Vagina (tissue), 2 donors: ENCODE measurements at regions of chr1 and their contacts with region 1.

Region 1: GRCh38 chr1:172745014-172745413 is 86.1 kb downstream of the FASLG start:
- DNase-seq: no peak
- H3K4me3 ChIP-seq: no peak overlapping the region
- H3K27ac ChIP-seq: no peak overlapping the region
- H3K4me1 ChIP-seq: peaks cover 18% of the 10 kb centered on the region
- H3K27me3 ChIP-seq: no peaks in the 10 kb centered on the region
- CTCF ChIP-seq: peak; percentile 28 to 70 (median 62)
- POLR2A ChIP-seq: no peak

Region 2: GRCh38 chr1:172719694-172720138 is 25.3 kb before region 1 on chr1:
- intact Hi-C with region 1: no loop called
- DNase-seq: no peak
- H3K4me3 ChIP-seq: no peak overlapping the region
- H3K27ac ChIP-seq: no peak overlapping the region
- H3K4me1 ChIP-seq: no peaks in the 10 kb centered on the region
- H3K27me3 ChIP-seq: no peaks in the 10 kb centered on the region
- CTCF ChIP-seq: peak in 2 of 3 experiments; percentile 33 to 76
- POLR2A ChIP-seq: no peak

Region 3: GRCh38 chr1:172883107-172883791 is 138.2 kb after region 1 on chr1:
- intact Hi-C with region 1: no loop called
- DNase-seq: no peak
- H3K4me3 ChIP-seq: no peak overlapping the region
- H3K27ac ChIP-seq: no peak overlapping the region
- H3K4me1 ChIP-seq: no peaks in the 10 kb centered on the region
- H3K27me3 ChIP-seq: no peaks in the 10 kb centered on the region
- CTCF ChIP-seq: no peak
- POLR2A ChIP-seq: no peak

Region 4: DNA sequence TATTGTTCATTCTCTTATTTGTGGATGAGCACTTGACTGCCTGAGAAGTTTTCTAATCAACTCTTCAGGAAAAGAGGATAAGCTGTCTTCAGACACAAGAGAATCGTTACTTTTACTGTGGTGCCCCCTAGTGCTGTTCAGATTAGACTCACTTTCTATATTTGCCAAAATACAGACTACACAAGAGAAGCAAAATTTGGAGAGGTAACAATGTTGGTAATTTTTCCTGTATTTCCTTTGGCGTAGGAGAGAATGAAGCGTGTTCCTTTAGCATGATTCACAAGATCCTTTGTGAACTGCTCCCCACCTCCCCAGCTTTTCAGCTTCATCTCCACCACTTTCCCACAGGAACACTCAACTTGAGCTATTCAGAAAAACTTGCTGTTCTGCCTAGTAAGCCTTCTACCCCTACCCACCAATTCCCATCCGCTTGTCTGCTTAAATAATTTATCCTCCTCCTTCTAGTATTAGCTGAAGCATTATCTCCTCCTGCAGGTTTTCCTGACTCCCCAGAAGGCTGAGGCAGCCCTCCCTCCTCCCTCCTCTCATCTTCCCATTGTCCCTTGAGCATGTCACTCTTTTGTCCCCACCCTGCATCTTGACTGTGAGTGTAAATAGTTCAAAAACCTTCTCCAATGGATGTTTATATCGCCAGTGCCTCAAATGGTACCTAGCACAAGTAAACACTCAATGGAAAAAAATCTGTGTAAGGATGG is 457.6 kb after region 1 on chr1:
- intact Hi-C with region 1: loop called (anchors 5 kb)
- DNase-seq: no peak
- H3K4me3 ChIP-seq: no peak overlapping the region
- H3K27ac ChIP-seq: no peak overlapping the region
- H3K4me1 ChIP-seq: peaks cover 6% of the 10 kb centered on the region
- H3K27me3 ChIP-seq: no peaks in the 10 kb centered on the region
- CTCF ChIP-seq: peak; percentile 32 to 63 (median 49)
- POLR2A ChIP-seq: no peak

Region 5: GRCh38 chr1:173409613-173410012 is 664.6 kb after region 1 on chr1:
- intact Hi-C with region 1: loop called (anchors 5 kb)
- DNase-seq: no peak
- H3K4me3 ChIP-seq: no peak overlapping the region
- H3K27ac ChIP-seq: no peak overlapping the region
- H3K4me1 ChIP-seq: no peaks in the 10 kb centered on the region
- H3K27me3 ChIP-seq: no peaks in the 10 kb centered on the region
- CTCF ChIP-seq: no peak
- POLR2A ChIP-seq: no peak